ENCODE measurements at regions of chr12 and their contacts with region 1.

Region 1: DNA sequence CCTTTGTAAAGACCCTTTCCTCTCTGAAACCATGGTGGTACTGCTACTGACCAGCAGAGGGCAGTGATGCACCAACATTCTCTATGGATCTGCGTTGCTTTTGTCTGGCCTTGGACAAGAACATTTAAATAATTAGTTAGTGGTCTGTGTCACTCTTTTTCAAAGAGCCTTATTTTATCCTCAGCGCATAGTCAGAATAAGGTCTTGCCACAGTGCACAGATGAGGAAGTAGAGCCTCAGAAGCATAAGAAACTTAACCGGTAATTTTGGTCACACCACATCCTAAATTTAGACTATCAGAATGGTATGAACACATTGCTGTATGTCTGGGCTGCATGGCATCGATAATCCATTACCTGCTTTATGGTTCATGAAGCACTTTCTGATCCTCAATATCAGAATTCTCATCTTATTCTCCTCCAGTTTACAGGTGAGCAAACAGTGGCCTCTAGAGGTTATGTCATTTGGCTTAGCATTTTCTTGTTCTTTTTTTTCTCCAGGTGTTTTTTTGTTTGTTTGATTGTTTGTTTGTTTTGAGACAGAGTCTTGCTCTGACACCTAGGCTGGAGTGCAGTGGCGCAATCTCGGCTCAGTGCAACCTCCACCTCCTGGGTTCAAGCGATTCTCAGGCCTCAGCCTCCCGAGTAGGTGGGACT is 23.7 kb upstream of the IFT81 start:
- DNase-seq: peak; percentile 25 to 75 (median 53)
- H3K4me3 ChIP-seq: no peak overlapping the region
- H3K4me3 Mint-ChIP-seq: no peak overlapping the region
- H3K27ac ChIP-seq: no peak overlapping the region
- H3K27ac Mint-ChIP-seq: peak overlapping the region in 7 of 8 donors; percentile 13 to 86 (median 55)
- H3K4me1 ChIP-seq: no peaks in the 10 kb centered on the region
- H3K4me1 Mint-ChIP-seq: peaks cover 6 to 8% (median 7%) of the 10 kb centered on the region in 3 donors
- H3K27me3 ChIP-seq: no peaks in the 10 kb centered on the region
- H3K27me3 Mint-ChIP-seq: no peaks in the 10 kb centered on the region

Region 2: DNA sequence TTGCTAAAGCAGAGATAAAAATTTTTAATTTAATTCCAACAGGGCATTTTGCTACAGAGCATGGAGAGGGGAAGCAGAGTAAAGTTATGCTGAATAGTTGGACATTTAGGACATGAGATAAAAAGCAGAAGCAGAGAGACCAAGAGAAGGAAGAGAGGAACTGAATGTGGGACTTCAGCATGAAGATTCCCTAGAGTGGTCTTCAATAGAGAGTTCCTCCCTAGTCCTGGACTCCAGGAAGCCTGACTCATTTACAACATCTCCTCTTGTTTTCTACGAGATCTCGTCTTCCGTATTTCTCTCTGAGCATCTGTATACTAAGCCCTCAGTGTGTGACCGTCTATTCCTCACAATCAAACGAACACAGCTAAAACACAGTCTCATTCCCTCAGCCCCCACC is 11.5 kb before region 1 on chr12:
- CTCF ChIA-PET with region 1: interaction called, 13 read pairs
- POLR2A ChIA-PET with region 1: no interaction called
- DNase-seq: no peak
- H3K4me3 ChIP-seq: no peak overlapping the region
- H3K4me3 Mint-ChIP-seq: no peak overlapping the region
- H3K27ac ChIP-seq: no peak overlapping the region
- H3K27ac Mint-ChIP-seq: no peak overlapping the region
- H3K4me1 ChIP-seq: no peaks in the 10 kb centered on the region
- H3K4me1 Mint-ChIP-seq: no peaks in the 10 kb centered on the region
- H3K27me3 ChIP-seq: no peaks in the 10 kb centered on the region
- H3K27me3 Mint-ChIP-seq: peaks cover 16 to 25% of the 10 kb centered on the region in 2 donors

Measured in CD8-positive, alpha-beta memory T cell (primary cell).